ENCODE measurements at regions of chr1 and their contacts with region 1.

Region 1: DNA sequence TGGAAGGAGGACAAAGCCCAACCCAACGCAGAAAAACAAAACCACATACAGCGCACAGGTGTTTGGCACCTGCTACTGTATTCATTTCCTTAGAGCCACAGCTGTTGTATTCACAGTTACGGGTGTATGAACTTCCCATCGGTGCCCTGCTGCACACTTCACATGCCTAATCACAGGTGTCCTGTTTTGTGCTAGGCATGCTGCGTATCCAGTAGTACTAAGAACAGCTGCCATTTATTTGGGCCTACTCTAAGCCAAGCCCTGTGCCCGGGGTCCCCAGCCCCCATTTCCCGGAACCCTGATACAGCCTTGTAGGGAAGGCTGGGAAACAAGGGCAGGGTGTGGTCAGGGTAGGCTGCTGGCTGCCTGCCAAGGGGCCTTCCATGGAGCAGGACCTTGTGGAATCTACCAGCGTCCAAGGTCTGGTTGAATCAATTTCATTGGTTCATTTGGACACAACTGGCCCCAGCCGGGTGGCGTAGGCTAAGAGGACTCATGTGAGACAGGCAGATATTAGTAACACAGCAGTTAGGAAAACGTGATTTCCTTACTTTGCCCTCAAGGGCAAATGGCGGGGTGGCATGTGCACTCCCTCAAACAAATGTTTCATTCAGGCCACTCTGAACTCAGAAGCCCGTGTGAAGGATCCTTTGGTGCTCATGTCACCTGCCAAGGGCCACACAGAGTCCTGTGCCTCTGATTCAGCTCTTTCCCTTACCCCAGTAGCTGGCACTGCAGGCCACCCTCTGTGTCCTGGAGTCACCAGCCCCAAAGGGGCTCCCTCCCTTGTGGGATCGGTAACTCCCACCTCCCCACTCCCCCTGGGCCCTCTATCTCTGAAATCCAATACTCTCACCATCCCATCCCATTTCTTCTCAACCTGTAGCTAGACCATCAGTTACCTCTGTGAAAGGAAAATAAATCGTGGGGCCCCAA is 986 bp upstream of the RNF186 start:
- DNase-seq: peak; percentile 47
- H3K4me3 Mint-ChIP-seq: peak overlapping the region; percentile 39
- H3K27ac Mint-ChIP-seq: peak overlapping the region; percentile 39
- H3K4me1 Mint-ChIP-seq: peaks cover 28% of the 10 kb centered on the region
- H3K27me3 Mint-ChIP-seq: no peaks in the 10 kb centered on the region
- CTCF ChIP-seq: no peak

Region 2: GRCh38 chr1:19828546-19828945 is 12.5 kb after region 1 on chr1:
- CTCF ChIA-PET with region 1: no interaction called
- intact Hi-C with region 1: no loop called
- DNase-seq: no peak
- H3K4me3 Mint-ChIP-seq: no peak overlapping the region
- H3K27ac Mint-ChIP-seq: no peak overlapping the region
- H3K4me1 Mint-ChIP-seq: no peaks in the 10 kb centered on the region
- H3K27me3 Mint-ChIP-seq: no peaks in the 10 kb centered on the region
- CTCF ChIP-seq: no peak

Region 3: GRCh38 chr1:19861034-19861433 is 45.0 kb after region 1 on chr1:
- CTCF ChIA-PET with region 1: interaction called, 3 read pairs
- intact Hi-C with region 1: loop called (anchors 5 kb)
- DNase-seq: peak; percentile 50
- H3K4me3 Mint-ChIP-seq: no peak overlapping the region
- H3K27ac Mint-ChIP-seq: peak overlapping the region; percentile 47
- H3K4me1 Mint-ChIP-seq: peaks cover 29% of the 10 kb centered on the region
- H3K27me3 Mint-ChIP-seq: no peaks in the 10 kb centered on the region
- CTCF ChIP-seq: no peak

Region 4: DNA sequence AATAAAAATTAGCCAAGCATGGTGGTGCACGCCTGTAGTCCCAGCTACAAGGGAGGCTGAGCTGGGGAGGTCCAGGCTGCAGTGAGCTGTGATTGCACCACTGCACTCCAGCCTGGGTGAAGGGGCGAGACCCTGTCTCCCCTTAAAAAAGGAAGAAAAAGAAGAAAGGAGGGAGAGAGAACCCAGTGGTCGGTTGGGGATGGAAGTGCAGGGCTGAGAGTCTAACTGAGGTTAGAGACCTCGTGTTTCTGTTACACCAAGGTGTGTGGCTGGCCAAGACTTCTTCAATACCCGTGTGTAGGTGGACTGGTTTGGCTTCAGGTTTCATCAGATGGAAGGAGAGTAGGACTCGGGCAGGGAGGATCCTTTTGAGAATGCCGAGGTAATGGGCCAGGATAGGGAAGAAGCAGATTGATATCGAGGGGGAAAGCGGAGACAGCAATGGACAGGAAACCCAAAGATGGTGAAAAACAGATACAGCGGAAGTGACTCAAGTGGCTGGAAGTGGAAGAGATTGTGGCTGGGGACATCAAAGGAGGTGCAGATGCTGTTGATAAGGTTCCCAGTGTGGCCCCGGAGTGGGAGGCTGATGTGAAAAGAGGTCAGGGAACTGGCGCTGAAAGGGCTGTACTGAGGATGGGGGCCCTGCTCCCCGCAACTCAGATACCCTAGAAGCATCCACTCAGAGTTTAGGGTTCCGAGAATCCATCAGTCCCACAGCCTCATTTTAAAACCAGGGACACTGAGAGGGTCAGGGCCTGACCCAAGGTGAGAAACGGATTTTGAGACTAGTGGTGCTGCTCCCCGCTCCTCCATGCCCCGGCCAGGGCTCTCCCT is 369.1 kb after region 1 on chr1:
- CTCF ChIA-PET with region 1: no interaction called
- intact Hi-C with region 1: no loop called
- DNase-seq: no peak
- H3K4me3 Mint-ChIP-seq: peak overlapping the region; percentile 3
- H3K27ac Mint-ChIP-seq: no peak overlapping the region
- H3K4me1 Mint-ChIP-seq: no peaks in the 10 kb centered on the region
- H3K27me3 Mint-ChIP-seq: peaks cover 63% of the 10 kb centered on the region
- CTCF ChIP-seq: no peak

Measured in Calu3 (cell line).